CD4-positive, alpha-beta T cell (primary cell): ENCODE measurements at regions of chr1 and their contacts with region 1.

Region 1: DNA sequence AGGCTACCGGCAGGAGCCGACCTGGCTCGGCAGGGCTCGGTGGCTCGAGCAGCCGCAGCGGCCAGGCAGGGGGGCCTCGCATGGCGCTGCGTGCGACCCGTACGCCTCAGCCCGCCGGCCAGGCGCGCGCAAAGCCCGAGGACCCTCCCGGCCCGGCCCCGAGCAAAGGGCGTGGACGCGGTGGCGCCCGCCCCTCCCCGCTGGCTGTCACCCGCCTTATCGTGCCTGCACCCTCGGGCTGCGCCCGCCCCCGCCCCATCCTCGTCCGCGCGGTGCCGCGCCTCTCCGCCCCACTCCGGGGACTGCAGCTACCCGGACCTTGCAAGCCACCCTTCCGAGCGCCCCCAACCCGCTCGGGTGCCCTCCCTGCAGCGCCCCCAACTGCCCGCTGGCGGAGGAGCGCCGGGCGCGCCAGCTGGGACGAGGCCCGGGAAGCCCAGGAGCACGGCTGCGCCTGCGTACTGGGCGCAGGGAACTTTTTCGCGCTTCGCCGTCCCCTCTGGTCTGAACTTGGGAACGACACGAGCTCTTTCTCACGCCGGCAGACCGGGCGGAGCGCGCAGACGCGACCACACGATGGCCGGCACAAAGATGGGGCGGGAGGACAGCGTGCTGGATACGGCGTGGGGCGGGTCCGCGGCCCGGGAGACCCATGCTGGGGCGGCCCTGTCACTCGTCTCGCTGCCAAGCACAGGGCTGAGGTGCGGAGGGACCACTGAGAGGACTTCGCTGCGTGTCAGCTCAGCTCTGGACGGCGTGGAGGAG is at the start of gene ABCB10:
- DNase-seq: peak; percentile 68 to 94 (median 84)
- ATAC-seq: peak; percentile 76
- H3K4me3 ChIP-seq: peak within 1 kb of the TSS; percentile 75
- H3K4me3 Mint-ChIP-seq: peak within 1 kb of the TSS; percentile 93
- H3K27ac ChIP-seq: peak within 1 kb of the TSS; percentile 35 to 61
- H3K27ac Mint-ChIP-seq: peak within 1 kb of the TSS; percentile 92
- H3K4me1 ChIP-seq: peaks cover 37% of the 10 kb centered on the region
- H3K4me1 Mint-ChIP-seq: peaks cover 44% of the 10 kb centered on the region
- H3K27me3 ChIP-seq: no peaks in the 10 kb centered on the region
- H3K27me3 Mint-ChIP-seq: no peaks in the 10 kb centered on the region
- CTCF ChIP-seq: peak; percentile 54
- total RNA-seq, gene ABCB10: 9.8 to 11.0 TPM

Region 2: GRCh38 chr1:229507951-229508822 is 50.6 kb before region 1 on chr1 and contains the start of gene NUP133:
- CTCF ChIA-PET with region 1: interaction called, 4 read pairs
- POLR2A ChIA-PET with region 1: interaction called, 49 read pairs
- intact Hi-C with region 1: loop called (anchors 5 kb)
- DNase-seq: peak; percentile 96 to 100 (median 98)
- ATAC-seq: peak; percentile 97
- H3K4me3 ChIP-seq: peak within 1 kb of the TSS; percentile 98
- H3K4me3 Mint-ChIP-seq: peak within 1 kb of the TSS; percentile 97
- H3K27ac ChIP-seq: peak within 1 kb of the TSS; percentile 90 to 93
- H3K27ac Mint-ChIP-seq: peak within 1 kb of the TSS; percentile 97
- H3K4me1 ChIP-seq: peaks cover 19% of the 10 kb centered on the region
- H3K4me1 Mint-ChIP-seq: peaks cover 33% of the 10 kb centered on the region
- H3K27me3 ChIP-seq: no peaks in the 10 kb centered on the region
- H3K27me3 Mint-ChIP-seq: no peaks in the 10 kb centered on the region
- CTCF ChIP-seq: no peak
- total RNA-seq, gene NUP133: 42.0 to 45.3 TPM

Region 3: DNA sequence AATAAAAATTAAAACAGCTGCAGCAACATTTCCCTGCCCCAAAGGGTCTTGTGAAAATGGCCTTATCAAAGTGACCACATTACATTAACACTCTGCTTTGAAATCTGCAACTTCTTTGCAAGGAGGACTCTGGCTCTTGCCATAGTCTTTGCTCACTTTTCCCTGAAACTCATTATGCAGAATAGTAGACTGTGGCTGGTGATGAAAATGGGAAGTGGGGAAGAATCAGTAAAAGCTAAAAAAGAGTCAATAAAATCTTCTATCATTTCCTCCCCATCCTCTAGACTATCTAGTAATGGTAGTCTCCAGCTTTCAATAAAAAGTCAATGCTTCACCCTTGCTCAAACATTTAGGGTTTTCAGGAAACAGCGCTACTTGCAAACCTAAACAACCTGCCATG is 32.1 kb before region 1 on chr1:
- CTCF ChIA-PET with region 1: no interaction called
- POLR2A ChIA-PET with region 1: no interaction called
- intact Hi-C with region 1: no loop called
- DNase-seq: no peak
- ATAC-seq: no peak
- H3K4me3 ChIP-seq: no peak overlapping the region
- H3K4me3 Mint-ChIP-seq: no peak overlapping the region
- H3K27ac ChIP-seq: no peak overlapping the region
- H3K27ac Mint-ChIP-seq: no peak overlapping the region
- H3K4me1 ChIP-seq: no peaks in the 10 kb centered on the region
- H3K4me1 Mint-ChIP-seq: no peaks in the 10 kb centered on the region
- H3K27me3 ChIP-seq: no peaks in the 10 kb centered on the region
- H3K27me3 Mint-ChIP-seq: no peaks in the 10 kb centered on the region
- CTCF ChIP-seq: no peak

Region 4: DNA sequence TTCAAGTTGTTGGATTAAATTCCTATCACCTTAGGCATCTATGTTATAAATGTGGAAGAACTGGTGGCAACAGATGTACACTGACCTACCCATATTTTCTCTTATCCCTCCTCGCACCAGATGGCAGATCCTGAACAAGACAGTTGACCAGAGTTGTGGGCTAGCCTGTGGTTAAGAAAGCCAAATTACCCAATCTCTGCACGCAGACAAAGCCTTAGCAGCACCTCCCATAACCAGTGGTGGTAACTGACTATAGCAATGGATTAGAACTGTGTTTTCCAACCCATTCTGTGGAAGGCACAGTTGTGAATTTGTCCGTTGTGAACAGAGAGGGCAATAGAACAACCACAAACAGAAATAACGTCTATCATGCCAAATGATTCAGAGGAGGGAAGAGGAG is 20.9 kb before region 1 on chr1:
- CTCF ChIA-PET with region 1: interaction called, 5 read pairs
- POLR2A ChIA-PET with region 1: interaction called, 7 read pairs
- intact Hi-C with region 1: loop called in 1 of 2 experiments (anchors 2 kb)
- DNase-seq: no peak
- ATAC-seq: no peak
- H3K4me3 ChIP-seq: no peak overlapping the region
- H3K4me3 Mint-ChIP-seq: no peak overlapping the region
- H3K27ac ChIP-seq: no peak overlapping the region
- H3K27ac Mint-ChIP-seq: no peak overlapping the region
- H3K4me1 ChIP-seq: peaks cover 6% of the 10 kb centered on the region
- H3K4me1 Mint-ChIP-seq: peaks cover 8% of the 10 kb centered on the region
- H3K27me3 ChIP-seq: no peaks in the 10 kb centered on the region
- H3K27me3 Mint-ChIP-seq: no peaks in the 10 kb centered on the region
- CTCF ChIP-seq: no peak